PC-9 (cell line): ENCODE measurements at regions of chr1 and their contacts with region 1.

Region 1: DNA sequence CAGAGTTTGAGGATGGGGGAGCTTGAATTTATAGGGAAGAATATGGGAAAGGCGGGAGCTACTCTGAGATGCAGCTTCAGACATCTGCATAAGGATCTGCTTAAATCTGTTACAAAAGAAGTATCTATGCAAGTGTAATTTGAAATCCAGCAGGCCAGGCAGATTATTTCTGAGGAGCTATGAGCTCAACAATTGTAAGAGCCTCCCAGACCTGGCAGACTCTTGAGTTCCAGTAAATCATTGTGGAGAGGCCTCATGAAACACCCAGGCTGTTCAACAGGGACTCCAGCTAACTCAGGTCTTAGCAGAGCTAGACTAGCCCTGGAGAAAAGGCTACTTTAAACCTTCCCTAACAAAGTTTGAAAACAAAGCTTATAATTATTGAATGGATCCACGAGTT is 647.5 kb upstream of the CHRM3 start:
- DNase-seq: no peak
- H3K4me3 ChIP-seq: no peak overlapping the region
- H3K27ac ChIP-seq: no peak overlapping the region
- H3K4me1 ChIP-seq: no peaks in the 10 kb centered on the region
- H3K27me3 ChIP-seq: no peaks in the 10 kb centered on the region
- CTCF ChIP-seq: no peak

Region 2: GRCh38 chr1:238672262-238672661 is 66.6 kb before region 1 on chr1:
- CTCF ChIA-PET with region 1: no interaction called
- POLR2A ChIA-PET with region 1: no interaction called
- intact Hi-C with region 1: no loop called
- DNase-seq: no peak
- H3K4me3 ChIP-seq: no peak overlapping the region
- H3K27ac ChIP-seq: no peak overlapping the region
- H3K4me1 ChIP-seq: no peaks in the 10 kb centered on the region
- H3K27me3 ChIP-seq: no peaks in the 10 kb centered on the region
- CTCF ChIP-seq: no peak

Region 3: DNA sequence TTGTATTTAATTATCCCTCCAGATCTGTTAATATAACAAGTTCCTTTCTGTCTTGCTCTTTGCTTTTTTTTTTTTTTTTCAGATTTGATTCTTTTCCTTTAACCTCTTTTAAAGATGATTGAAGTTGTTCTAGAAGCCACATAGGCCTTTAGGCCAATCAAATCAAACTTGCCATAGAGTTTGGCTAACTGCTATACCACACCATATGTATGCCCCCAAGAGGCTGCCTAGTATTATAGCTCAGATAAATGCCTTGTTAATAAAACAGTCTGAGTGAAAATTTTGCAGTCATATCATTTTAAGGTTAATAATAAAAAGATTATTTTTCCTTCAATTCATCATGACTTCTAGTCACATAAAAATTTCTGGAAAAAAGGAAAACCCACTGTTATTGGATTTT is 48.5 kb before region 1 on chr1:
- CTCF ChIA-PET with region 1: no interaction called
- POLR2A ChIA-PET with region 1: no interaction called
- intact Hi-C with region 1: loop called (anchors 1 kb)
- DNase-seq: no peak
- H3K4me3 ChIP-seq: no peak overlapping the region
- H3K27ac ChIP-seq: no peak overlapping the region
- H3K4me1 ChIP-seq: no peaks in the 10 kb centered on the region
- H3K27me3 ChIP-seq: no peaks in the 10 kb centered on the region
- CTCF ChIP-seq: no peak

Region 4: DNA sequence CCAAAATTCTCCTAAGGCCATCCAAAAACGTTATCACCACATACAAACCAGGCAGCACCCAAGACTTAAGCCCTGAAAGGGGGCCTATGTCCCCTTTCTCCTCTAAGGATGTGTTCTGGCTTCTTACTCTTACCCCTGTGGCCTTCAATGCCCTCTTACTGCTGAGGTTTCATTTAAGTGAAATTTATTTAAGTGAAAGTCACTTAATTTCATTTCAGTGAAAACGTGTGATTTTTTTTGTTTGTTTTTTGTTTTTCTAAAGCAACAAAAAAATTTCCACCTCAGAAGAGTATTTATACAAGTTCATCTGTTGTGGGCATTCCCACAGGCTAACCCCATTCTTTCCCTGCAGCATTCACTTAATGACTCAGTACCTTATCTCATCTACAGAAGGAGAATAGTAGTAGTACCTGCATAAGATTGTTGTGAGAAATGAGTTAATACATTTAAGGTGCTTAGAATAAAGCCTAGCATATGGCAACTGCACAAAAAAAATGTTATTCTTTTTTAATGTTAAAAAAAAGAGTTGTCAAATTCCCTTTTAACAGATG is 868.0 kb after region 1 on chr1:
- CTCF ChIA-PET with region 1: no interaction called
- POLR2A ChIA-PET with region 1: no interaction called
- intact Hi-C with region 1: no loop called
- DNase-seq: peak in 1 of 2 experiments; percentile 51
- H3K4me3 ChIP-seq: no peak overlapping the region
- H3K27ac ChIP-seq: no peak overlapping the region
- H3K4me1 ChIP-seq: 0 out of 2 replicates have a peak, but pooled peaks cover 6% of the 10 kb centered on the region
- H3K27me3 ChIP-seq: no peaks in the 10 kb centered on the region
- CTCF ChIP-seq: no peak